ENCODE measurements at regions of chr7 and their contacts with region 1.

Region 1: GRCh38 chr7:151110941-151111645 is 24.8 kb downstream of the AGAP3 start:
- H3K4me3 ChIP-seq: no peak overlapping the region
- H3K27ac ChIP-seq: no peak overlapping the region
- H3K4me1 ChIP-seq: no peaks in the 10 kb centered on the region
- CTCF ChIP-seq: peak; percentile 90

Region 2: DNA sequence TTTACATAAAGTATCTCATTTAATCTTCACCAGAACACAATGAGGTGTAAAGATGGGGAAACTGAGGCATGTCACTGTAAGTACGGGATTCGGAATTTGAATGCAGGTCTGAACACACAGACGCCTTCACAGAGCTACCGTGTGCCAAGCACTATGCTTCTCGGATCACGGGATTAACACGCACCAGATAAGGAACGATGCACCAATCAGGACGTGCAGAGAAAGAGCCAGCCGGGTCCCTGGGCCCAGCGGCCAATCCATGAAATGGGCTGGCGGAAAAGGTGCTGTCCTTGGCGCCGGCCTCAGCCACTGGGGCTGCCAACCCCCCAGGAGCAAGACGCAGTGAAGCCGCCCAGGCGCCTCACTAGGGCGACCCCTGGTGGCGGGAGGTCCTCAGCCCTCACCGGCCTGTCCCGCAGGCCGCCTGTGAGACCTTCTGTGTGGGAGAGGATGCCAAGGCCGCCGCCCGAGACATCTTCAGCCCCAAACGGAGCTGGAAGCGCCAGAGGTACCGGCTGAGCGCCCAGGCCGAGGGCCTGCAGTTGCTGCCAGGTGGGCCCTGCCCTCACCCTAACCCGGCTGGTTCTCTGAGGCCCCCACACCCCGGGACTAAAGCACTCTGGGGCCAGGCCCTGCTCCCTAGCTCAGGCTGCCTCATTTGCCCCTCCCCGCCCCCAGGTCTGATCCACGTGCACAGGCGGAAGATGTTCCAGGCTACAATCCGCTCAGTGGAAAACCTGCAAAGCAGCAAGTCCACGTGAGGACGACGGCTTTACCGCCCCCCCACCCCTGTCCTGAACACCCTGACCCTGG is 102.4 kb before region 1 on chr7:
- CTCF ChIA-PET with region 1: interaction called, 27 read pairs
- POLR2A ChIA-PET with region 1: interaction called, 3 read pairs
- H3K4me3 ChIP-seq: no peak overlapping the region
- H3K27ac ChIP-seq: no peak overlapping the region
- H3K4me1 ChIP-seq: no peaks in the 10 kb centered on the region
- CTCF ChIP-seq: peak; percentile 53; the same call in 1 of the 2 replicates

Region 3: GRCh38 chr7:151038951-151039849 is 71.9 kb before region 1 on chr7:
- CTCF ChIA-PET with region 1: interaction called, 12 read pairs
- POLR2A ChIA-PET with region 1: interaction called, 5 read pairs
- H3K4me3 ChIP-seq: no peak overlapping the region
- H3K27ac ChIP-seq: peak overlapping the region; percentile 13
- H3K4me1 ChIP-seq: peaks cover 6% of the 10 kb centered on the region
- CTCF ChIP-seq: no peak

Region 4: GRCh38 chr7:151080522-151081169 is 30.4 kb before region 1 on chr7 and contains the start of gene FASTK:
- CTCF ChIA-PET with region 1: interaction called, 19 read pairs
- POLR2A ChIA-PET with region 1: interaction called, 12 read pairs
- H3K4me3 ChIP-seq: peak within 1 kb of the TSS; percentile 89
- H3K27ac ChIP-seq: peak within 1 kb of the TSS; percentile 75
- H3K4me1 ChIP-seq: peaks cover 7% of the 10 kb centered on the region; the same call in 1 of the 2 replicates
- CTCF ChIP-seq: no peak

Region 5: GRCh38 chr7:151091431-151091830 is 19.7 kb before region 1 on chr7:
- CTCF ChIA-PET with region 1: interaction called, 43 read pairs
- POLR2A ChIA-PET with region 1: interaction called, 4 read pairs
- H3K4me3 ChIP-seq: no peak overlapping the region
- H3K27ac ChIP-seq: no peak overlapping the region
- H3K4me1 ChIP-seq: peaks cover 4% of the 10 kb centered on the region; the same call in 1 of the 2 replicates
- CTCF ChIP-seq: peak; percentile 41

Region 6: GRCh38 chr7:151123822-151124464 is 12.8 kb after region 1 on chr7:
- CTCF ChIA-PET with region 1: interaction called, 10 read pairs
- POLR2A ChIA-PET with region 1: no interaction called
- H3K4me3 ChIP-seq: no peak overlapping the region
- H3K27ac ChIP-seq: no peak overlapping the region
- H3K4me1 ChIP-seq: no peaks in the 10 kb centered on the region
- CTCF ChIP-seq: peak; percentile 99